B cell (primary cell): ENCODE measurements at regions of chr7 and their contacts with region 1.

Region 1: DNA sequence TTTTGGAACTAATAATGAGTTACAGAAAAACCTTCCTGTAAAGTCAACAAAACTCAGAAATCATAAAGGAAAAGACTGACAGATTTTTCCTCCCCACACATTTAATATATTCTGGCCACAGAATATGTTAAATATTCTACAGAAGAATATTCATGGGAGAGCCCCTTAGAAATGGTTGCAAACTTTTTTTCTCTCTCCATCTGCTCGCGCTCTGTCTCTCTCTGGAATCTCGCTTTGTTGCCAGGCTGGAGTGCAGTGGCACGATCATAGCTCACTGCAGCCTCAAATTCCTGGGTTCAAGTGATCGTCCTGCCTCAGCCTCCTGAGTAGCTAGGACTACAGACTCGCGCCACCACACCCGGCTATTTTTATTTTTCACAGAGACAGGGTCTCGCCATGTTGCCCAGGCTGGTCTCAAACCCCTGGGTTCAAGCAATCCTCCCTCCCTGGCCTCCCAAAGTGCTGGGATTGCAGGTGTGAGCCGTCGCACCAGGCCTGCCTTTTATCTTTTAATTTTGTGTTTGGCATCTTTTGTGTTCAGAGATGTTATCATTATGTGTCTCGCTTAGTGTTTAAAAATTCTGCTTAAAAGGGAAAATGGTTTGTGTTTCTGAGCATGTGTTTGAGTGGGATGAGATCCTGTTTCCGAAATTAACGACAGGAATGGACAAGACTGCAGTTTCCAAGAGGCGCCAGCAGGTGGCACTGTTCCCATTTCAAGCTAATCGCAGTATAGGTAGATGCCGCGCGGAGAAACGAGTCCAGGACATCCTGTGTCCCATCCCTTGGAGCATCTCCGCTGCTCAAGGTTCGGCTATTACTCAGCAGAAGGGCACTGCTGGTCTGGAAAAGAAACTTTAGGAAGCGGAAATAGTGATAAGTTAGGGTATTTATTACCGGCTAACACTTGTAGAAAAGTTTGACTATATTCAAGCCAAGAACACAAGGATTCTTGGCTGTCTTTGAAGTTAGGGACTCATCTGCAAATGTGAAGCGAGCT is 23.1 kb upstream of the ST7 start:
- DNase-seq: peak; percentile 76
- ATAC-seq: peak; percentile 88
- H3K4me3 ChIP-seq: no peak overlapping the region
- H3K4me3 Mint-ChIP-seq: no peak overlapping the region
- H3K27ac ChIP-seq: no peak overlapping the region
- H3K27ac Mint-ChIP-seq: no peak overlapping the region
- H3K4me1 ChIP-seq: peaks cover 3 to 4% of the 10 kb centered on the region in 2 donors
- H3K4me1 Mint-ChIP-seq: peaks cover 6% of the 10 kb centered on the region
- H3K27me3 ChIP-seq: peaks cover 0 to 9% (median 0%) of the 10 kb centered on the region in 4 experiments
- H3K27me3 Mint-ChIP-seq: peaks cover 6% of the 10 kb centered on the region
- CTCF ChIP-seq: peak; percentile 99

Region 2: DNA sequence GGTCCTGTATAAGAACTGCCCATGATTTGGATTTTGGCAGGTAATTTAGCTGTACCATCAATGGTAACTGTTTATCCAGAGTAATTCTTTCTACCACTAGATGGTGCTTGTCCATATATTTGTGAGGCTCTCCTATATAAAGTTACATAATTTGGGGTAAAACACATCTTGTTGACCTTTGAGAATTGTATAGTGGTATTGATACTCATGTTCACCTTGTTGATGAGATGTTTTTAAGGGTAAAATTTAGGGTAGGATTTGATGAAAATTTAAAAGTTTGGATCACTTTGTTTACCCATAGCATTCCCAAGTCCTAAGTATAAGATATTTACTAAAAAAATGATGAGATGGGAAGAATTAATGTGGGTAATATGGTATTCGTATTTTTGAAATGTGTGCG is 54.7 kb after region 1 on chr7:
- CTCF ChIA-PET with region 1: interaction called, 19 read pairs
- POLR2A ChIA-PET with region 1: no interaction called
- intact Hi-C with region 1: loop called (anchors 2 kb)
- DNase-seq: peak; percentile 45
- ATAC-seq: no peak
- H3K4me3 ChIP-seq: no peak overlapping the region
- H3K4me3 Mint-ChIP-seq: no peak overlapping the region
- H3K27ac ChIP-seq: no peak overlapping the region
- H3K27ac Mint-ChIP-seq: no peak overlapping the region
- H3K4me1 ChIP-seq: no peaks in the 10 kb centered on the region
- H3K4me1 Mint-ChIP-seq: no peaks in the 10 kb centered on the region
- H3K27me3 ChIP-seq: no peaks in the 10 kb centered on the region
- H3K27me3 Mint-ChIP-seq: no peaks in the 10 kb centered on the region
- CTCF ChIP-seq: peak; percentile 80

Region 3: DNA sequence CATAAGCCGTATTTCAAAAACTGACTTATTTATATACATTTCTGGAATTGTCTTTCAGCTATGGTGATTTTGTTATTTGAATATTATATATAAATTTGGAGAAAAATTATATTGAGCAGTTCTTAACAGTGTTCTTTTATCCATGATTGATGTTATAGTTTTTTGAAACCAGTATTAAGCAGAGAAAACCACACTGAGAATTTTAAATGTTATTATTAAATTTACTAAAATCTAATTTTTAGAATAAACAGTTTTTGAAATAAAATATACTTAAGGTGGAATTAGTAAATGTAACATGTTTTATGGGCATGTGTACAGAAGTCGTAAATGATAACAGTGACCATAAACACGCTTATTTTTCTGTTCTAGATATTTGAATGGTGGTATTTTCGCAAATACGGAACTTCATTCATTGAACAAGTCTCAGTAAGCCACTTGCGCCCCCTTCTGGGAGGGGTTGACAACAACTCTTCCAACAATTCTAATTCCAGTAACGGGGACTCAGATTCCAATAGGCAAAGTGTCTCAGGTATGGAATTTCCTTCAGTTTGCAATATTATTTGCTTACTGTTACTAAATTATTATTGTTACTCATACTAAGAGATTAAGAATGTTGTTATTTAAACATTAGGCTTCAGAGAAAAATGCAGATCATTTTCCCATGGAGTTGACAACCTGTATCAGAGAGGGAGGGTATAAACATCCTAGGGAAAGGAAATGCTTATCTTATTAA is 189.1 kb after region 1 on chr7:
- CTCF ChIA-PET with region 1: interaction called, 165 read pairs
- POLR2A ChIA-PET with region 1: no interaction called
- intact Hi-C with region 1: loop called (anchors 1 kb)
- DNase-seq: peak; percentile 74
- ATAC-seq: peak; percentile 65
- H3K4me3 ChIP-seq: no peak overlapping the region
- H3K4me3 Mint-ChIP-seq: no peak overlapping the region
- H3K27ac ChIP-seq: no peak overlapping the region
- H3K27ac Mint-ChIP-seq: no peak overlapping the region
- H3K4me1 ChIP-seq: no peaks in the 10 kb centered on the region
- H3K4me1 Mint-ChIP-seq: no peaks in the 10 kb centered on the region
- H3K27me3 ChIP-seq: no peaks in the 10 kb centered on the region
- H3K27me3 Mint-ChIP-seq: no peaks in the 10 kb centered on the region
- CTCF ChIP-seq: peak; percentile 89

Region 4: DNA sequence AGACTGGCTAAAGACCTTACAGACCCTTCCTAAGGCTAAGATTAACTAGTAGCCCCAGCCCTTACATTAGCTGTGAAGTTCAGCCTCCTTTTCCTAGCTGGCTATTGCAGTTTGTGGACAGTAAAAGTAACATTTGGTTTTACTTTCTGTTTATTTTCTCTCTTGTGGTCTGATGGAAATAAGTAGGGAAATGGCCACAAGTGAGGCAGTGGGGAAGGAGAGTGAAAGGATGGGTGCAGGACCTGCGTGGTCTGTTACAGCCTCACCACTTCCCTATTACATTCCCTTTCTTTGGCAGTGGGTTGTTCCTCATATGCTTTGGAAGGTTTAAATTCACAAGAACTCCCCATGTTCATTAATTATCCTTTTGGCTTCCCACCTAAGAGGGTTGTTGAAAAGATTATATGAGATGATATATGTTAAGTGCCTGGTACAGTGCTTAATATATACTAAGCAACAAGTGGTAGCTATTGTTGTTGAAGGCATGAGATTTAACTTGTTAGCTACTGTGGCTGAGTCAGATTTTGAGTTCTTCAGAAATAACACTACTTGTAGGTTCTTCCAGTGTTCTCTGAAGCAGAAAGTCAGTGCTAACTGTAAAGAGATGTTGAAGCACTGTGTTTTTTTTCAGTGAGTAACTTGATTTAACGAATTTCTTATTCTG is 204.8 kb after region 1 on chr7:
- CTCF ChIA-PET with region 1: interaction called, 18 read pairs
- POLR2A ChIA-PET with region 1: no interaction called
- intact Hi-C with region 1: no loop called
- DNase-seq: no peak
- ATAC-seq: no peak
- H3K4me3 ChIP-seq: no peak overlapping the region
- H3K4me3 Mint-ChIP-seq: no peak overlapping the region
- H3K27ac ChIP-seq: no peak overlapping the region
- H3K27ac Mint-ChIP-seq: no peak overlapping the region
- H3K4me1 ChIP-seq: no peaks in the 10 kb centered on the region
- H3K4me1 Mint-ChIP-seq: peaks cover 5% of the 10 kb centered on the region
- H3K27me3 ChIP-seq: no peaks in the 10 kb centered on the region
- H3K27me3 Mint-ChIP-seq: no peaks in the 10 kb centered on the region
- CTCF ChIP-seq: no peak

Region 5: DNA sequence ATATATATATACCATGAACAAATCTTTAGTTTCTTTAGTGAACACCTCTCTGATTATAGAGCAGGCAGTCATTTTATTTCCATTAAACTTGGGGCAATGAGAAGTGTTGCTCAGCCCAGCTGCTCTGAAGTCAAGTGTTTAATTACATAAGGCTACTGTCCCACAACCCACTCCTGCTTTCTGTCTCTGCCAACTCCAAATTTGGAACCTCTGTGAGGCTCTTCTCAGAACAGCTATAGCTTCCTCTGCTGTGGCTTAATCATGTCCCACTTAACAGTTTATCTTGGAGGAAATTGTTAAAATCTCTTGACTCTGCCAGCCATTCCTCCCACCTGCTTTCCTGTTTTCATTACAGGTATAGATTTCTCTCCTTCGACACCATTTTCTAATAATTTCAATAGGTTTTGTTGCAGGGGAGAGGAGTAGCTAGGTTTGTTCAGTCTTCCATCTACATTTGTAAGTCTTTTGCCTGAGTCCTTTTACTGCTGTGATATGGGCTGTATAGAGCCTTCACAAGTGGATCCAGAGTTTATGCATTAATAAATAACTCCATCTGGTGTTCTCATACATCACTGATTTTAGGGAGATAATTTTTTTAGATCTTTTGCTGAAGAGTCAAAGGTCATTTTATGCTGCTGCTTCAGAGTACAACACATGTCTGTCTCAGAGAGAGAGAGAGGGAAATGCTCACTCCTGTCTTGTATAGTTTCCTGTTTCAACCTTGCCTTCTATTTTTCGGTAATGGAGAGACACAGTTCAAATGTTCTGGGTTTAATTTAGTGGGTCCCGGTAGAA is 222.2 kb after region 1 on chr7:
- CTCF ChIA-PET with region 1: no interaction called
- POLR2A ChIA-PET with region 1: no interaction called
- intact Hi-C with region 1: no loop called
- DNase-seq: no peak
- ATAC-seq: no peak
- H3K4me3 ChIP-seq: no peak overlapping the region
- H3K4me3 Mint-ChIP-seq: no peak overlapping the region
- H3K27ac ChIP-seq: no peak overlapping the region
- H3K27ac Mint-ChIP-seq: no peak overlapping the region
- H3K4me1 ChIP-seq: no peaks in the 10 kb centered on the region
- H3K4me1 Mint-ChIP-seq: no peaks in the 10 kb centered on the region
- H3K27me3 ChIP-seq: no peaks in the 10 kb centered on the region
- H3K27me3 Mint-ChIP-seq: no peaks in the 10 kb centered on the region
- CTCF ChIP-seq: no peak